HEK293 (cell line): ENCODE measurements at regions of chr9 and their contacts with region 1.

Region 1: DNA sequence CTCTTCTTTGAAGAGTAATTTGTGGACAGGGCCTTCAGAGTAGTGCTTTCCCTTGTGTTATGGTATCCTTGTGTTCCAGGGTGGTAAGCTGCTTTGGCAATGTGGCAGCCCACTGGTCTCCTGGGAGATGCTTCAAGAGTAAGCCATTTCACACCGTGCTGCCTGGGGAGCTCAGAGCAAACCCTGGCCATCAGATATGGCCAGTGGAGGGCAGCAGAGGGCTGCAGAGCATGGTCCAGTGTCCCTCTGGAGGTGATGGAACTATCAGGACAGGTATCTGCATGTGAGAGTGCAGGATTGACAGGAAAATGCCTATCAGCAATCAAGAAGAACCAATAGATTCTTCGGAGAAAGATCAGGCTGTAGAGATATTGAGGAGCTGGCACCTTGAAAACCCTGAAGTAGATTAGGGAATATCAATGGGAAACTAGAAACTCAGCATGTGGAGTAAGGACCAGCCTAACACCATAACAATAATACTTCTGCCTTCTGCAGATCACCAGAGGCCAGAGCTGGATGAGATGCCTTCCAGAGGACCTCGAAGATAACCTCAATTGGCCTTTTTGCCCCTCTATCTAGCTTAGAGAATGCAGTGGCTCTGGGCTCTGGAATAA is 90.8 kb downstream of the PLPPR1 start:
- H3K4me3 ChIP-seq: no peak overlapping the region
- H3K27ac ChIP-seq: no peak overlapping the region
- H3K4me1 ChIP-seq: no peaks in the 10 kb centered on the region
- CTCF ChIP-seq: peak; percentile 48; the same call in 1 of the 2 replicates

Region 2: GRCh38 chr9:101132801-101133200 is 13.5 kb after region 1 on chr9:
- CTCF ChIA-PET with region 1: interaction called, 20 read pairs
- POLR2A ChIA-PET with region 1: no interaction called
- H3K4me3 ChIP-seq: no peak overlapping the region
- H3K27ac ChIP-seq: no peak overlapping the region
- H3K4me1 ChIP-seq: no peaks in the 10 kb centered on the region
- CTCF ChIP-seq: no peak

Region 3: GRCh38 chr9:101235105-101235866 is 116.0 kb after region 1 on chr9:
- CTCF ChIA-PET with region 1: interaction called, 13 read pairs
- POLR2A ChIA-PET with region 1: no interaction called
- H3K4me3 ChIP-seq: no peak overlapping the region
- H3K27ac ChIP-seq: no peak overlapping the region
- H3K4me1 ChIP-seq: no peaks in the 10 kb centered on the region
- CTCF ChIP-seq: no peak